GM10248 (cell line): ENCODE measurements at regions of chr17 and their contacts with region 1.

Region 1: GRCh38 chr17:40287494-40288369 is at the start of gene CDC6:
- DNase-seq: peak; percentile 98
- CTCF ChIP-seq: no peak

Region 2: GRCh38 chr17:40203131-40203530 is 84.6 kb before region 1 on chr17:
- CTCF ChIA-PET with region 1: interaction called, 55 read pairs
- POLR2A ChIA-PET with region 1: interaction called, 6 read pairs
- DNase-seq: no peak
- CTCF ChIP-seq: no peak

Region 3: GRCh38 chr17:40311575-40311974 is 23.8 kb after region 1 on chr17:
- CTCF ChIA-PET with region 1: interaction called, 10 read pairs
- POLR2A ChIA-PET with region 1: no interaction called
- DNase-seq: peak; percentile 19
- CTCF ChIP-seq: no peak